ENCODE measurements at regions of chr2 and their contacts with region 1.

Region 1: GRCh38 chr2:64661741-64662169 is 8.0 kb upstream of the SERTAD2 start:
- DNase-seq: no peak
- ATAC-seq: peak; percentile 81
- H3K4me3 ChIP-seq: no peak overlapping the region
- H3K27ac ChIP-seq: peak overlapping the region; percentile 56; the same call in 1 of the 2 replicates
- H3K4me1 ChIP-seq: peaks cover 40% of the 10 kb centered on the region
- H3K27me3 ChIP-seq: no peaks in the 10 kb centered on the region
- CTCF ChIP-seq: peak in 1 of 3 experiments; percentile 23; a peak in 1 of 6 replicates
- EP300 ChIP-seq: peak in 1 of 2 experiments; percentile 33; a peak in 1 of 4 replicates
- POLR2A ChIP-seq: no peak
- RAD21 ChIP-seq: no peak

Region 2: DNA sequence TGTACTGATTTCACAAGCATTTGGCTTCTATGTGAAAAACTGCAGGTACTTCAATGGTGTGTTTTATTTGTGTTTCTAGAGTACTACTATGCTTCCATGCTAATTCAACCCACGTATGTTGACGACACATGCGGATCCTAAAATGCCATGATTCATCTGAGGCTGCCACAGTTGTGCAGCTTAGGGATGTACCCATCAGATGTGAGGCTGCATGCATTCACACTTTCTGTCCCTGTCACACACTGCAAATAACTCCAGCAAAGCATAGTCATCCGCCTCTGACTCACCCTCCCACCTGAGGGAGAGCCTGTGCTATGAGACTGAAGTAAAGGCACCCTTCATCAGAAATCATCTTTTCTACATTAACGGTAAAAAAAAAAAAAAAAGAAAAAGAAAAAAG is 14.1 kb after region 1 on chr2:
- CTCF ChIA-PET with region 1: interaction called, 60 read pairs
- POLR2A ChIA-PET with region 1: interaction called, 12 read pairs
- RAD21 ChIA-PET with region 1: interaction called, 7 read pairs
- SMC1A ChIA-PET with region 1: interaction called, 67 read pairs
- in situ Hi-C with region 1: no loop called
- intact Hi-C with region 1: no loop called
- DNase-seq: no peak
- ATAC-seq: peak; percentile 38; the same call in 2 of the 3 replicates
- H3K4me3 ChIP-seq: no peak overlapping the region
- H3K27ac ChIP-seq: no peak overlapping the region
- H3K4me1 ChIP-seq: peaks cover 20% of the 10 kb centered on the region
- H3K27me3 ChIP-seq: no peaks in the 10 kb centered on the region
- CTCF ChIP-seq: no peak
- EP300 ChIP-seq: no peak
- POLR2A ChIP-seq: no peak
- RAD21 ChIP-seq: no peak

Measured in GM12878 (cell line).